ENCODE measurements at regions of chr6 and their contacts with region 1.

Region 1: GRCh38 chr6:71190809-71191208 is 97.8 kb upstream of the OGFRL1 start:
- DNase-seq: no peak
- ATAC-seq: no peak
- H3K4me3 ChIP-seq: no peak overlapping the region
- H3K27ac ChIP-seq: no peak overlapping the region
- H3K4me1 ChIP-seq: no peaks in the 10 kb centered on the region
- H3K27me3 ChIP-seq: no peaks in the 10 kb centered on the region
- CTCF ChIP-seq: no peak

Region 2: DNA sequence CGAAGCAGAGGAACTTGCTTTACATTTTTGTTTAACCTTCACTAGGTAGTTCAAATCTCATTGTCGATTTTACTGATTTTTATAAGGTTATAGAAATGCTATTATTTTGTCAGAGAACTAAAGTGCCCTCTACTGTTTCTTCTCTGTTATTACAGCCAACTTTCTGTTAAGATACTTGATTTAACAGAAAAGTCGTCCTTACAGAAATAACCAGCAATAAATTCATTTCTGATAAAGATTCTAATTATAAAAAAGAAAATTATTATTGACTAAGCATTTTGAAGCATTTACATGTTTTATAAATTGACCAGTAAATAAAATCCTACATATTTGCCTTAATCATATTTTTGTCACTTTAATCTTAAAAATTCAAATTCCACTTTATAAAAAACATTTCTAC is 158.6 kb after region 1 on chr6:
- intact Hi-C with region 1: loop called (anchors 5 to 10 kb)
- DNase-seq: no peak
- ATAC-seq: peak in 1 of 4 donors; percentile 67
- H3K4me3 ChIP-seq: no peak overlapping the region
- H3K27ac ChIP-seq: no peak overlapping the region
- H3K4me1 ChIP-seq: peaks cover 3% of the 10 kb centered on the region
- H3K27me3 ChIP-seq: no peaks in the 10 kb centered on the region
- CTCF ChIP-seq: peak; percentile 67

Region 3: DNA sequence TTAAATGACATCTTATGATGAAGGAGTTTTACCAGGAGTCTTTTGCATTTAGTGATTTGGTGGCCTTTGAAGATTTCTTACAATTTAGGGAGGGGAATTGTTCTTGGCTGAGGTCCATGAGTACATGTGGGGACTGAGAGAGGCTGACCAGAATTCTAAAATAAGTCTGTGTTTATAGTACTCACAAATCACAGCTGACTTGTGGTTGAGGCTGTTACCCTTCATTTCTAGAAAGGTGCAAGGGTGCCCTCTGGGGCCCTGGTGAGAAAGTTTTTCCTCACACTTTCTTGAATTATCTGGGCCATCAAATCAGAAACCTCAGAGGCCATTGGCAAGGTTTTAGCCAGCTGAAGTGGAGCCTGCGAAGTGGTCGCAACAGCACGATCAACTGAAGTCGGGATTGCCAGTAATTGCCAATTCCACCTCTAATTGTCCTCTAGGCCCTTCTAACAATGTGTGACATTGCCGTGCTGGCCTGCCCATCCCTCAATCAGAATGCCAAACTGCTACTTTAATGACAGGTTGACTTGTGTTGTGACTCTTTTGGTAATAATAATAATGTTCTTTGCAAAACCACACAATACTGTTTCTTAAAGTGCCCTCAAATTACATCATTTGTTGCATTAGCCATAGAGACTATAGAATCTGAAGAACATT is 319.4 kb after region 1 on chr6:
- intact Hi-C with region 1: loop called in 1 of 2 experiments (anchors 10 kb)
- DNase-seq: peak; percentile 31 to 49
- ATAC-seq: peak; percentile 67 to 85 (median 71)
- H3K4me3 ChIP-seq: no peak overlapping the region
- H3K27ac ChIP-seq: no peak overlapping the region
- H3K4me1 ChIP-seq: peaks cover 11% of the 10 kb centered on the region
- H3K27me3 ChIP-seq: no peaks in the 10 kb centered on the region
- CTCF ChIP-seq: peak; percentile 54

Measured in psoas muscle (tissue), 8 donors.